Posterior cingulate gyrus (tissue), 11 donors: ENCODE measurements at regions of chr3 and their contacts with region 1.

Region 1: DNA sequence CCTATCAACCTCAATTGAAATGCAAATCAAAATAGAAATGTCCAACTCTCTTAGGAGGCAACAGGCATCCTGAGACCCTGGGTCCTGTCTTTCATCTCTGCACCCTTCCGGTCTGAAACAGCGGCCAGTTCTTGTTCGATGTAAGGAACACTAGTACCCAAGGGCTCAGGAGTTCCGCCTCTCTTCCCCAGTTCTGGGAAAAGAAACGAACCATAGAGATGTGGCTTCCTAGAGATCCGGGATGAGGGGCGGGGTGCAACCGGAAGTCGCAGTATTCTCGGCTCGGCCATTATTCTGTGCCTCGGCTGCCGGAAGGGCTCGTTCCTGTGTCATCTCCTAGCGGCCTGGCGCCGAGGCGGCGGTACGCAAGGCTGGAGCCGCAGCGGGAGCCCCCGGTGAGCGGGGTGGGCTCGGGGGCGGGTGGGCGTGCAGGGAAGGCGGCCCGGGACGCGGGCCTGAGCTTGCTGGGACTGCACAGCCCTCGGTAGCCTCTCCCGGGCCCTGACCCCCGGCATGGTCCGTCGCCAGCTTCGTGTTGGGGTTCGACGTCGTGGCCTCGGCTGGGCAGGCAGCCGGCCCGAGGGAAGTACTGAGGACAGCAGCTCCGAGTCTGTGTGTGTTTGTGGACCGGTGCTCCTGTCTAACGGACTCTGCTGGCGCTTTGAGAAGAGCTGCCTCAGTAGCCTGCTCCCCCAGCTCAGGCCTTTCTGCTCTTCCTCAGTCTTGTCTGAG is at the start of gene ZNF197:
- DNase-seq: peak; percentile 78 to 98 (median 89)

Region 2: DNA sequence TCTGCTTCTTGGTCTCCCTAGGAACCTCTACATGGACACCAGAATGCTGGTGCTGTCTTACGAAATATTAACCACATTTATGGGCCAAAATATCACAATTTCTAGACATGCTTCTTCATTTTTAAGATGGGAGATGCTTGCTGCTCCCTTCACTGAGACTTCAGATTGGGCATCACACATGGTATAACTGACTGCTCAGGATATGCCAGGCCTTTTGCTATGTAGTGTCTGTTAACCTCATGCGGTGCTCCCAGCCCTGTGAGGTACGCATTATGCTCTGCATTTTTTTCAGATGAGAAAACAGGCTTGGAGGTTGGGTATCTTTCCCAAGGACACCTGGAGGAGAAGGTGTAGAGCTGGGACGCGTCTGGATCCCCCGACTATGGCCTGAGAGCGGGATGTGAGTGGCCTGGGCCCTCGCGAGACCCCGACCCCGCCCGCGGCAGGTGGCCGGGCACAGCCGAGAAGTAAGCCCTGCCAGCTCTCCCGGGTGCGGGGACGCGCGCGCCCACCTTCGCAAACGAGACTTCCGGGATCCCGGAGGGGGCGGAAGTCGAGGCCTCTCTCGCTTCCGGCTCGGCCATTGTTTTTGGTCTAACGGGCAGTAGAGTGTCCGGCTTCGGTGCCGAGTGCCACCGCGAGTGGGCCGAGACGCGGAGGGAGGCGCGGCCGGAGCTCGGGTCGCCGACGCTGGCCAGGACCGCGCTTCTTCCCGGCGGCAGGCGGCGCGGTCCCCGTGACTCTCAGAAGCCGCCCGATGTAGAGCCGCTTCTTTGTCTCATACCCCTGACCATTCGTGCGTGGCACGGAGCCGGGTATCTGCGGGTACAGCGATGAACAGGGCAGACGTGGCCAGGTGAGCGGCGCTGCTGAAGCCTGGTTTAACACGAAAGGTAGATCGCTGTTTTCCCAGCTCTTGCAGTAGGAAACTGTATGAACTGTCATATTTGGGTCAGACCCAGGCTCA is 70.0 kb before region 1 on chr3 and contains the start of gene ZKSCAN7:
- intact Hi-C with region 1: loop called (anchors 2 kb)
- DNase-seq: peak; percentile 62 to 96 (median 72)

Region 3: DNA sequence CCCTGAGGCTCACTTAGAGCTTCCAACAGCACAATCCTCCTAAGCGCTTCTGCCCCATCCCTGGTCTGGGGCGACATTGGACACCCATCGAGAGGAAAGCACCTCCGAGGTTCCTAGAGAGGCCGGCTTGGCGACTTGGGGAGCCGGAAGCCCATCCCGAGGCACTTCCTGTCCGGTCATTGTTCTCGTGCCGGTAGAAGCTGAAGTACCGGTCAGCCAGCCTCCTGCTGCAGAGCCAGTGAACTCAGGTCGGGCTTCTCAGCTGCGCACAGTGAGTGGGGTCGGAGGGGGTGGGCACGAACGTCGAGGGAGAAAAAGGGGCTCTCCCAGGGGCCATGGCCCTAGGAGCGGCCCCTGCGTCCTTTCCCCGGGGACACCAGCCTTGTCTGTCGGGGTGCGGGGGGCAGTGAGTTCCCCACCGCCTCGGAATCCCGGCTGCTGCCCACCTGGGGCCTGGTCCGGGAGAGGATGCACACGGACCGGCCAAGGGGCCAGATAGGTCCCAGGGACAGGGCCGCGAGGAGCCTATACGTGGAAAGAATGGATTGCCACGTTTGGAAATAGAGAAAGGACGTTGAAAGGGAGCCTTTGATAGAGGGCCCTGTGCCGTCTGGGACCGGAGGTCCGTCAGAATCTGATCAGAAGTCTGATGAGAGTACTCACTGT is 23.8 kb after region 1 on chr3 and contains the start of gene ZNF35:
- intact Hi-C with region 1: loop called (anchors 1 kb)
- DNase-seq: peak; percentile 77 to 98 (median 89)

Region 4: GRCh38 chr3:44682182-44682896 is 57.4 kb after region 1 on chr3:
- intact Hi-C with region 1: no loop called
- DNase-seq: no peak

Region 5: DNA sequence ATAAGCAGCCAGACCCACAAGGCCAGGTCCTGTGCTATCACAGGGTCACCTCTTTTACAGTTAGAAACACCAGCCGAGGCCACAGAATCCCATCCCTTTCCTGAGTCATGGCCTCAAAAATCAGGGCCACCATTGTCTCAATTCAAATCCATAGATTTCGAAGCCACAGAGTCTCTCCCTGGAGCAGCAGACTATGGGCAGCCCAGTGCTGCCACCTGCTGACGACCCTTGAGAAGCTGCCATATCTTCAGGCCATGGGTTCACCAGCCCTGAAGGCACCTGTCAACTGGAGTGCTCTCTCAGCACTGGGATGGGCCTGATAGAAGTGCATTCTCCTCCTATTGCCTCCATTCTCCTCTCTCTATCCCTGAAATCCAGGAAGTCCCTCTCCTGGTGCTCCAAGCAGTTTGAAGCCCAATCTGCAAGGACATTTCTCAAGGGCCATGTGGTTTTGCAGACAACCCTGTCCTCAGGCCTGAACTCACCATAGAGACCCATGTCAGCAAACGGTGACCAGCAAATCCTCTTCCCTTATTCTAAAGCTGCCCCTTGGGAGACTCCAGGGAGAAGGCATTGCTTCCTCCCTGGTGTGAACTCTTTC is 289.1 kb after region 1 on chr3:
- intact Hi-C with region 1: no loop called
- DNase-seq: peak in 6 of 10 donors; percentile 50 to 93 (median 58)

Region 6: GRCh38 chr3:46114324-46114989 is 1489.5 kb after region 1 on chr3:
- intact Hi-C with region 1: no loop called
- DNase-seq: no peak